Activated CD4-positive, alpha-beta memory T cell treated with anti-CD3 and anti-CD28 coated beads, Interleukin-2, amount 10 ng/mL, durations not matched to agents 7 days and 5 days (primary cell): ENCODE measurements at regions of chr1 and their contacts with region 1.

Region 1: GRCh38 chr1:110053557-110054428 is 16.7 kb downstream of the ALX3 start:
- DNase-seq: peak; percentile 70
- H3K4me3 Mint-ChIP-seq: no peak overlapping the region
- H3K27ac Mint-ChIP-seq: no peak overlapping the region
- H3K4me1 Mint-ChIP-seq: no peaks in the 10 kb centered on the region
- H3K27me3 Mint-ChIP-seq: no peaks in the 10 kb centered on the region

Region 2: DNA sequence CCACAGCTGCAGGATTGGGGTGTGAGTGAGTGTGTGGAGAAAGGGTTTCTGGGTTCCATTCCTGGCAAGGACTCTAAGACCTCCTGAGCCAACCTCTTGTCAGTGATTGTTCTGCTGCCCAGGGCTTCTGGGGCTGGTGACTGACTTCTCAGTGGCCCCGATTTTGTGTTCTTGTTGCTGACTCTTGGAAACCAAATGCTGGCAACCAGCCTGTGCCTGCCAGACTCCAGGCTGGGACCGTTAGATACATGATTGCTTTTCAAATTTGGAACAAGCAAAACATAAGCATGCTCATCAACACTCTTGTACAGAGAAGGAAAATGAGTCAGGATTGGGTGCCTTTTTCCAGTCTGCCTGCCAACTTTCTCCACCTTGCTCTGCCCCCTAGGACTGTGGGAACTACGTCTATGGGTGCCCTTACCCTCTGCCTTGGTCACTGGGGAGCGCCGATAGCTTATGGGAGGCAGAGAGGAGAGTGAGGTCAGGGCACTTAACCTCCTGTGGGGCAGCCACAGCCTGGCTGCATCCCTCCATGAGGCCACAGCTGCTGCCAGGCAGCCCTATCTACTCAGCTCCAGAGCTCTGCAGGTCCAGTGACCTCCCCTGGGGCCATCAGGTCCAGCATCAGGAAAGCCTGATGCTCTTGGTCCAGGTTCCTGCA is 250.8 kb before region 1 on chr1:
- CTCF ChIA-PET with region 1: no interaction called
- POLR2A ChIA-PET with region 1: no interaction called
- DNase-seq: no peak
- H3K4me3 Mint-ChIP-seq: peak overlapping the region; percentile 66
- H3K27ac Mint-ChIP-seq: peak overlapping the region; percentile 100
- H3K4me1 Mint-ChIP-seq: peaks cover 89% of the 10 kb centered on the region
- H3K27me3 Mint-ChIP-seq: no peaks in the 10 kb centered on the region

Region 3: DNA sequence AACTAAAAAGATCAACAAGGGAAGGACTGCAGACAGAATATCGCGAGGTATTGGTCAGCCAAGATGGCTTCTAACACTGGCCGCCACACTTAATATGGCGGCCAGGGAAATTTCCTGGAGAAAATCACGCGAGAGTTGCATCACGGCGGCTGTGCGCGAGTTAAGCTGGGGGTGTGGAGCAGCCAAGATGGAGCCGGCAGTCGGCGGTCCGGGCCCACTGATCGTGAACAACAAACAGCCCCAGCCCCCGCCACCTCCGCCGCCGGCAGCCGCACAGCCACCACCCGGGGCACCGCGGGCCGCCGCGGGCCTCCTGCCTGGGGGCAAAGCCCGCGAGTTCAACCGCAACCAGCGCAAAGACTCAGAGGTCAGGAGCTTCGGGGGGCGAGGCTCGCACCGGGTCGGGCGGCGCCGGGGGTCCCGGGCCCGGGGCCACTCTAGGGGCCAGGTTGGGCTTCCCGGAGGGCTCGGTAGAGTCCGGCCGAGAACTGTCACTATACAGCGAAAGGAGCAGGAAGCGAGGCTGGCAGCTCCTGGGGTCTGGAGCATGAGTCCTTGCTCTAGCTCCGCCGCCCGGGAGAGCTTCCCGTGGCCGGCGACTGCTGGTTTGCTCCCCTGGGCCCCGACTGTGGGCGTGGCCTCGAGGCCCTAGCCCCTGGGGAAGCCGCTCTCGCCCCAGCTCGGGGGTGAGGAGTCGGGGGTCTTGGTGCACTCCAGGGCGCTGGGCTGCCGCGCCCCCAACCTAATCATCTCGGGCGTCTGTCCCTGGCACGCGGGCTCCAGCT is 19.1 kb before region 1 on chr1 and contains the start of gene STRIP1:
- CTCF ChIA-PET with region 1: interaction called, 18 read pairs
- POLR2A ChIA-PET with region 1: interaction called, 5 read pairs
- DNase-seq: peak; percentile 95
- H3K4me3 Mint-ChIP-seq: peak within 1 kb of the TSS; percentile 90
- H3K27ac Mint-ChIP-seq: peak within 1 kb of the TSS; percentile 74
- H3K4me1 Mint-ChIP-seq: peaks cover 62% of the 10 kb centered on the region
- H3K27me3 Mint-ChIP-seq: no peaks in the 10 kb centered on the region
- total RNA-seq, gene STRIP1: 34.1 to 34.7 TPM

Region 4: DNA sequence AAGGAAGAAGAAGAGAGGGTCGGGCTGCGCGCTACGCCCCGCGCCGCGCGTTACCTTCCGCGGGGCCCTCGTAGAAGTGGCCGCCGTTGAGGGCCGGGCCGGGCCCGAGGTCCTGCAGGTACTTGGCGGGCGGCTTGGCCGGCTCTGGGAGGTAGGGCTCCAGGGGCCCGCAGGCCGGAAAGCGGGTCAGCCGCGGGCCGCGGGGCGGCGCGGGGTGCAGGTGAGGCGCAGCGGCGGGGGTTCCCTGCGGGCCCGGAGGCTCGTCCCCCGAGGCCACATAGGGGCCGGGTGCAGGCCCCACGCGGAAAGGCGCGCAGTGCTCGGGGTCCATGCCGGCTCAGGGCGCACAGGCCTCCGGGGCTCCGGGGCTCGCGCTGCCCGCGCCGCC is 16.5 kb after region 1 on chr1:
- CTCF ChIA-PET with region 1: interaction called, 17 read pairs
- POLR2A ChIA-PET with region 1: no interaction called
- DNase-seq: no peak
- H3K4me3 Mint-ChIP-seq: no peak overlapping the region
- H3K27ac Mint-ChIP-seq: no peak overlapping the region
- H3K4me1 Mint-ChIP-seq: peaks cover 11% of the 10 kb centered on the region
- H3K27me3 Mint-ChIP-seq: peaks cover 75% of the 10 kb centered on the region

Region 5: DNA sequence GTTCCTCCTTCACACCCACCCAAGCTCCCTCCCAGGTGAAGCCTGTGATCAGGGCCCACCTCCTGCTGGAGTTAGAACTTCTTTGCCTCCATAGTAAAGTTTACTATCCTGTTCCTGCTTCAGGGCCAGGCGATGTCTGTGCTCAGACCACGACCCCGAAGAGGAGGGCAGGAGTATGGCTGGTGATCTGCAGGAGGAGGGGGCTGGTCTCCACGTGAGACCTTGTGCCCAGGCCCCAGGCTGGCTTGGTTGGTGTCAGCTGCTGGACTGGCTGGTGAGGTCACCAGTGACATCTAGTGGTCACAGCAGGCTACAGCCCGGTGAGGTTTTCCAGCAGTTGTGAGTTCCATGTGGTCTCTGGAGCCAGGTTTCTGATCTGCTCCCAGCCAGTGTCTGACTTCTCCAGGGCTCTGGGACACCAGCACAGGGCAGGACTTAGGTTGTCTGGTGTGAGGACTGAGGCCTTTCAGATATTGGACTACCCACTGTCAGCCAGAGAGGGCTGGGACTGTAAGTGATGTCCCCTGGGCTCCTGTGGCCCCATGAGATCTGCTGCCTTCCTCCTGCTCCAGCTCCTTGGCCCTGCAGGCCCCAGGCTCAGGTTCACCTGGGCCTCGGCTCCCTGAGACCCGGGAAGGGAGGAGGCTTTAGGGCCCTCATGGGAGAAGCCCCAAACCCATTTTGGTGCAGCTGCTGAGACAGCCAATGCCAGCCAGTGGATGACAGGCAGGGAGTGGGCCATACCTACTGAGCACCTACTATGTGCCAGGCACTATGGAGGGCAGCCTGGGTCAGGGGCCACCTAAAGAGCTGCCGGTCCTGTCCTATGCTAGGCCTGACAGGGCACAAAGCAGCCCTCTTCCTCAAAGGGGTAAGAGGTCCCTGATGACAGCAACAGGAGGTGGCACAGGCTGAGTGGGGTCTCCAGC is 52.5 kb after region 1 on chr1:
- CTCF ChIA-PET with region 1: interaction called, 18 read pairs
- POLR2A ChIA-PET with region 1: no interaction called
- DNase-seq: peak; percentile 65
- H3K4me3 Mint-ChIP-seq: no peak overlapping the region
- H3K27ac Mint-ChIP-seq: no peak overlapping the region
- H3K4me1 Mint-ChIP-seq: no peaks in the 10 kb centered on the region
- H3K27me3 Mint-ChIP-seq: peaks cover 24% of the 10 kb centered on the region

Region 6: DNA sequence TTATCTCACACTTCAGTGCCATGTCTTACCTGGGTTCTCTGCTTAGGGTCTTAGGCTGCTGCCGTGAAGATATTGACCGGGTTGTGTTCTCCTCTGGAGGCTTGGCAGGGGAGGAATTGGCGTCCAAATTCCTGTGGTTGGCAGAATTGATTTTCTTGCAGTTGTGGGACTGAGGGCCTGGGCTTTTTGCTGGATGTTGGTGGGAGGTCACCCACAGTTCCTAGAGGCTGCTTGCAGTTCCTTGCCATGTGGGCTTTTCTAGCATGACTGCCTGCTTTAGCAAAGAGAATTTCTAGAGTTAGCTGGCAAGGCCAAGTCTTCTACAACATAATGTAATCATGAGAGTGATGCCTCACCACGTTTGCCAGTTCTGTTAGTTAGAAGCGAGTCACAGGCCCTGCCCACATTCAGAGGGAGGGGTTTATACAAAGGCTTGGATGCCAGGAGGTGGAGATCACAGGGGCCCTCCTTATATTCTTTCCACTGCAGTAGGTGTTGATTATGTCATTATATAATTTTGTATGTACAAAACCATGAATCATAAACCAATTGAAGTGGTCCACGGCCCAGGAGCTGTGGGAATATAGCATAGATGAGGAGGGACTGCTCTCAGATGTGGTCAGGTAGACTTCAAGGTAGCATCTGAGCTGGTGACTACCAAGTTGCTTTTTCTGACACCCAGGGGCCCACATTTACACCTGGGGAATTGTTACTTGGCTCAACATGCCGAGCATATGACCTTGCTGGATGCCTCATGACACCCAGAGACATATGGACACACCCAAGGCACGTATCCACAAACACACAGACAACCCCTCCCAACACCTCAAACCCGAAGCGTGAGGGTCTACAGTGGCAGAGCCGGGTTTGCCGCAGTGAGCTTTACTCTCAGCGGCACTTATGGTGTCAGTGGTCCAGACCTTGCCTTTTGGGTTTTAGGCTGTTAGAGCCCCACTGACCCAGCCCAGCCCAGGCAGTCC is 65.1 kb after region 1 on chr1:
- CTCF ChIA-PET with region 1: interaction called, 11 read pairs
- POLR2A ChIA-PET with region 1: no interaction called
- DNase-seq: no peak
- H3K4me3 Mint-ChIP-seq: no peak overlapping the region
- H3K27ac Mint-ChIP-seq: no peak overlapping the region
- H3K4me1 Mint-ChIP-seq: peaks cover 3% of the 10 kb centered on the region
- H3K27me3 Mint-ChIP-seq: peaks cover 29% of the 10 kb centered on the region

Region 7: DNA sequence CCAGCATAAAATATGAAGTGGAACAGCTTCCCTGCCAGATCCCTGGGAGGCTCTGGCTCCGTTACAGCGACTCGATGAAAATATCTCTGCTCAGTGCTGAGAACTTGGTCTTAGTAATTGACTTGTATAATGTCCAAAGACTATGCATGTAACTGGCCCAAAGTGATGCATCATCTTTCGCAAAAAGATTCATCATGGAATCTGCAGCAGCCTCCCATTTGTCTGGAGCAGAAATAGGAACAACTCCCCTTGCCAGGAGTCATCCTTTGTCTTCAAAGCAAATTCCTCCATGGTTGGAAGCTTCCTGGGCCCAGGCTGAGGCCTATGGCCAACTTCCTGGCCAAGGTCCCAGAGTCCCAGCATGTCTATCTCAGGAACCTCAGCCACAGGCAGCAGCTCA is 79.6 kb after region 1 on chr1:
- CTCF ChIA-PET with region 1: no interaction called
- POLR2A ChIA-PET with region 1: no interaction called
- DNase-seq: no peak
- H3K4me3 Mint-ChIP-seq: no peak overlapping the region
- H3K27ac Mint-ChIP-seq: no peak overlapping the region
- H3K4me1 Mint-ChIP-seq: peaks cover 9% of the 10 kb centered on the region
- H3K27me3 Mint-ChIP-seq: peaks cover 64% of the 10 kb centered on the region